Activated T-helper 2 cell treated with anti-CD3 and anti-CD28 coated beads, Interferon-gamma antibody, Interleukin-2, Interleukin-4, amounts not matched to agents 10 μg/mL and 5 μg/mL and 100 μg/mL, durations not matched to agents 14 hours and 24 hours and 36 hours (primary cell): ENCODE measurements at regions of chr3 and their contacts with region 1.

Region 1: DNA sequence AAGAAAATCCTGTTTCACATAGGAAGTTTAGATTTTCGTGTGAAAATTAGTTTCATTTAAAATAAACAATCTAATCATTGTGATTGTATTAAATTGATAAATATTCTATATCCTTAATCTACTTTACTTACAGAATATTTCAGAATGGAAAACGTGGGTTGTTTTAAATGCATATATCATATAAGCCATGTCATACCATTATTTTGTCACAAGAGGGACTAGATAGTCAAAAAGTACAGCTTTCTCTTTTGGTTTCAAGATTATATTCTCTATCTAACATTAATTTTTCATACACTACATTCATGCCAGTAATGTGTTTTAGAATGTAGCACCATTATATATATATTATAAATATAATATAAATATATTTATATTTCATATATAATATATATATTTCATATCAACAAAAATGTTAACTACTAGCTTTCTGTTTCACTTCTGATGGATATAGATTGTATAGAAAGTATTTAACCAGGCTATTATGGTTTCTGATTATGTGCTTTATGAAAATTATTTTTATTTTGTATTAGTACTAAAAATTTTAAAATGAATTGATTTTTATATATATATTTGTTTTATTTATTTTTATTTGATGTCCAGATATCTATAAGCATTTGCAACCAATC is 45.3 kb downstream of the OSTN start:
- DNase-seq: no peak
- H3K4me3 Mint-ChIP-seq: no peak overlapping the region
- H3K27ac Mint-ChIP-seq: no peak overlapping the region
- H3K4me1 Mint-ChIP-seq: peaks cover 1% of the 10 kb centered on the region
- H3K27me3 Mint-ChIP-seq: no peaks in the 10 kb centered on the region

Region 2: GRCh38 chr3:191282262-191283215 is 38.2 kb after region 1 on chr3:
- intact Hi-C with region 1: no loop called
- DNase-seq: no peak
- H3K4me3 Mint-ChIP-seq: no peak overlapping the region
- H3K27ac Mint-ChIP-seq: no peak overlapping the region
- H3K4me1 Mint-ChIP-seq: no peaks in the 10 kb centered on the region
- H3K27me3 Mint-ChIP-seq: no peaks in the 10 kb centered on the region

Region 3: DNA sequence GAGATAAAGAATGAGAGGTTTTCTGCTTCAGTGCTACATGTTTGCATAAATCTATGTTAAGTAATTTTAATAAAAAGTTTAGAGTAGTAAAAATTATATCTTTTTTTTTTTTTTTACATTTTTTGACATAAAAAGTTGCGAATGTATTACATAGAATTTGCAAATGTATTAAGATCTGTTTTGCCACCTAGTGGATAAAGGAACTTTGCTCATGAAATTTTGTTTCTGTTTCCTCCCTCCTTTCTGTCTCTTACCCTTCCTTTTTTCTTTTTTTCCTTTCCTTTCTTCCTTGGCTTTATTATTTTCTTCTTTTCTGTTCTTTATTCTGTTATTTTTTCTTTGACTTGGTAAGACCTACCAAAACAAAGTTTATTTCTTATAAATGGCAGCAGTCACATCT is 144.5 kb after region 1 on chr3:
- intact Hi-C with region 1: loop called (anchors 10 kb)
- DNase-seq: no peak
- H3K4me3 Mint-ChIP-seq: no peak overlapping the region
- H3K27ac Mint-ChIP-seq: no peak overlapping the region
- H3K4me1 Mint-ChIP-seq: no peaks in the 10 kb centered on the region
- H3K27me3 Mint-ChIP-seq: no peaks in the 10 kb centered on the region